Activated CD8-positive, alpha-beta T cell treated with anti-CD3 and anti-CD28 coated beads for 36 hours (primary cell): ENCODE measurements at regions of chr12 and their contacts with region 1.

Region 1: GRCh38 chr12:67804168-67804567 is 155.6 kb downstream of the DYRK2 start:
- DNase-seq: peak; percentile 75
- ATAC-seq: peak; percentile 94
- H3K4me3 Mint-ChIP-seq: no peak overlapping the region
- H3K27ac Mint-ChIP-seq: no peak overlapping the region
- H3K4me1 Mint-ChIP-seq: peaks cover 31% of the 10 kb centered on the region
- H3K27me3 Mint-ChIP-seq: no peaks in the 10 kb centered on the region
- CTCF ChIP-seq: no peak

Region 2: GRCh38 chr12:67630373-67631088 is 173.6 kb before region 1 on chr12:
- CTCF ChIA-PET with region 1: no interaction called
- POLR2A ChIA-PET with region 1: no interaction called
- intact Hi-C with region 1: no loop called
- DNase-seq: peak; percentile 92
- ATAC-seq: peak; percentile 96
- H3K4me3 Mint-ChIP-seq: peak overlapping the region; percentile 47
- H3K27ac Mint-ChIP-seq: peak overlapping the region; percentile 88
- H3K4me1 Mint-ChIP-seq: peaks cover 79% of the 10 kb centered on the region
- H3K27me3 Mint-ChIP-seq: no peaks in the 10 kb centered on the region
- CTCF ChIP-seq: peak; percentile 60

Region 3: DNA sequence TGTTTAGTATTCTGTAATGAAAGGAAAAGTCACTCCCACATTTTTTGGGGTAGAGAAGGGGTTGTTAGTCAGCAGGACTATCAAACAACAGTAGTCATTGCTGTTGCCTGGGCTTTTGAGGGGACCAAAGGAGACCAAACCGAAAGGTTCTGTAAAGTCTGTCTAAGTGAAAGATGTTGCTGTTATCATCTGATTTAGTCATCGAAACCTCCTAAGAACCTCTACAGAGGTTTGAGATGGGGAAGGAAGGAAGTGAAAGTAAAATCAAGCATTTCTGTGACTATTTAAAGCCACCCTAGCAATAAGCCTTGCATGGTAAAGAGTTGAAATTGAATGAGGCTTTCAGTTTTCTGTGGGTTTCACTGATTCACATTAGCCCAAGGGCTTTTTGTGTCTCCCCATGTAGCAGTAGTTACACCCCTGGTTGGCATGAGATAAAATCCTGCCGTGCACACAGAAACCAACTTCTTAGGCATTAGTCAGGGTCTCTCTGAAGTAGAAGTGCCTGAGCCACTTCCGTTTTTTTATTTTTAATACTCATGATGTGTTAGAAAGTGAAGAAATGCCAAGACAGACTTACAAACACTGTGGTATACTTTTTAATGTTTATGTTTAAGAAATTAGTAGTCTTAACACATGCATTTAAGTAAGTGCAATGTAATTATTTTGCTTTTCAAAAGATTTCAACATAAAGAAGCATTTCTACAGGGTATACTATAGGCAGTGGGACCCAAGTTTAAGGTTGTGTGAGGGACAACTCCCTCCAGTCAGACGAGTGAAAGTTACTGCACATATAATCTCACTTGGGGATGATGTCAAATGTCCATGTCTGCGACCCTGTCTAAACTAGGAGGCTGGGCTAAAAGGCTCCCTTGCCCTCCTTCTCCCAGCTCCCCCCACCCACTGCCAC is 105.2 kb before region 1 on chr12:
- CTCF ChIA-PET with region 1: no interaction called
- POLR2A ChIA-PET with region 1: no interaction called
- intact Hi-C with region 1: loop called (anchors 2 kb)
- DNase-seq: peak; percentile 79
- ATAC-seq: peak; percentile 89
- H3K4me3 Mint-ChIP-seq: peak overlapping the region; percentile 61
- H3K27ac Mint-ChIP-seq: peak overlapping the region; percentile 79
- H3K4me1 Mint-ChIP-seq: peaks cover 70% of the 10 kb centered on the region
- H3K27me3 Mint-ChIP-seq: no peaks in the 10 kb centered on the region
- CTCF ChIP-seq: no peak

Region 4: DNA sequence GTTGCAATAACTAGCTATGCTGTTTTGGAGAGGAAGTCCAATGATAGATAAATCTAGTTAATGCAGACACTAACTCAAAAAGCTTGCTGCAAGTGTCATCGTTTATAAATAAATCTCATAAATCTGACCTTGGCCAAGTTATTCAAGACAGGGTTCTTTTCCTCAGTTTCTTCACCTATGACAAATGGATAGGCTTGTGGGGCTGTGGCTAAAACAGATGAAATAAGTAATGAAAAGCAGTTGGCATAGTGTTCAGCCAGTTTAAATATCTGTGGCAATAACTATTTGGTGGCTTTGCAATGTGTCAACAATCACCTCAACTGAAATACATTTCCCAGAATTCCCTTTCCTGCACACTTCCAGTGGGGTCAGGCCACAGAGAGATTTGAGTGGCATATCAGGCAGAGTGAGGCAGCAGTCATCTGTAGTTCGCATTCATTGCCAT is 14.3 kb after region 1 on chr12:
- CTCF ChIA-PET with region 1: no interaction called
- POLR2A ChIA-PET with region 1: no interaction called
- intact Hi-C with region 1: no loop called
- DNase-seq: no peak
- ATAC-seq: no peak
- H3K4me3 Mint-ChIP-seq: no peak overlapping the region
- H3K27ac Mint-ChIP-seq: no peak overlapping the region
- H3K4me1 Mint-ChIP-seq: peaks cover 2% of the 10 kb centered on the region
- H3K27me3 Mint-ChIP-seq: no peaks in the 10 kb centered on the region
- CTCF ChIP-seq: no peak

Region 5: GRCh38 chr12:67910360-67911274 is 106.4 kb after region 1 on chr12:
- CTCF ChIA-PET with region 1: no interaction called
- POLR2A ChIA-PET with region 1: no interaction called
- intact Hi-C with region 1: no loop called
- DNase-seq: no peak
- ATAC-seq: no peak
- H3K4me3 Mint-ChIP-seq: no peak overlapping the region
- H3K27ac Mint-ChIP-seq: no peak overlapping the region
- H3K4me1 Mint-ChIP-seq: no peaks in the 10 kb centered on the region
- H3K27me3 Mint-ChIP-seq: peaks cover 5% of the 10 kb centered on the region
- CTCF ChIP-seq: no peak